Uterus (tissue), 4 donors: ENCODE measurements at regions of chr1 and their contacts with region 1.

Region 1: DNA sequence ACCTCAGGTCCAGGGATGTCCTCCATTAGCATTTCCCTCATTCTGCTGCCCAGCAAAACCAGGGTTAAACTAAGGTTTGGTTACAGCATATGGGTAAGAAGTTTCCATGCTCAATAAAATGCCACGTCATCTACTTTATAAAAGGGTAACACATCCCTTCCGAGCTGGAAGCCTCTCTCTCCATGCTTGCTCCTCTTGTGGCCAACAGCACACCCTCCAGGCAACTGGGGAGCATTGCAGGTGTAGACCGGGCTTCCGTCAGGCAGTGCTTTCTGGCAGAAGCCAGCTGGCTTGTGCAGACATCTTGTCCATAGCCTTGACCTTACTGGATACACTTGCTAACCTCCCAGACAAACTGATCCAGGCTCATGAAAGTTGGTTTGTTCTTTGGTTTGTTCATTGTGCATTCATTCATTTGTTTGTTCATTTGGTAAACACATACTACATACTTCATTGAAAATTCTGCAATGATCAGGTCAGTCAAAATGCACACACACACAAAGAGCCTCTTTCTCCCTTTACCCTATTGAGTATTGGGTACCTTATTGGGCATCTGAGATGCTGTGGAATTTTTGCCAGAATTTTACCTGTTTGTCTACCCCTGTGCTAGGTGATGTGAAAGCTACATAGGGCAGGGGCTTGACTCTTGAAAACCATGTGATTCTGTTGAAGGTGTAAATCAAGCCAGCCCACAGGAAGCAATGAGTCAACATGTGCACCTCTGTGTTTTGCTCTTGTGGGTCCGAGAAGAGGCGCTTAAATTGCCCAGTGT is 422.8 kb downstream of the CAMTA1 start:
- DNase-seq: no peak
- H3K4me3 ChIP-seq: no peak overlapping the region
- H3K27ac ChIP-seq: no peak overlapping the region
- H3K4me1 ChIP-seq: no peaks in the 10 kb centered on the region
- H3K27me3 ChIP-seq: no peaks in the 10 kb centered on the region
- CTCF ChIP-seq: no peak
- POLR2A ChIP-seq: no peak

Region 2: DNA sequence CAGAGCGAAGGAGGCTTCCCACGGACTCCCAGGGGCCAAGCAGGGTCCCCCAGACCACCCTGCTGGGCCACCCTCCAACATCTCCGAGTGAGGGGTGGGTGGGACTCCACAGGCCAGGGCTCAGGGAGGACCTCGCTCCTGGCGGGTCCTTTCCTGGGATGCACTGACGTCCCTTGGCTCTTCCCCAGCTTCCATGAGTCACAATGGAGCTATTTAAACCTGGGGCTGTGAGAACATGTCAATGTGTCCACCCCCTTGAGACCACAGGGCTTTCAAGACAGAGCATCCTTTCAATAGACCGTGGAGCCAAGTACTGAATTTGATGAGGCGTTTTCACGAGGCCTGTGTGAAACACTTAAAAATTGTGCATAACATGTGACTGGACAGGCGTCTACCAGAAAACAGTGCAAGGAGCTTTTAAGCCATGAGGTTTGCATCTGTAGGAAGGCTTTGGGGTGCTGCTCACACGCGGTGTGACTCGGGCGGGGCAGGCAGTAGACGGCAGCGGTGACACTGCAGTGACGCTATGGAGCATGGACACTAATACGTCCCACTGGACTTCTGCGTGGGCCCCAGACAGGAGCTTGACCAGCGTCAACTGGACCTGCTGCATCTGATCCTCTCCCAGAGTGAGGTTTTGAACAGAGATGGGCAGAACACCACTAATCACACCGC is 1191.7 kb before region 1 on chr1:
- intact Hi-C with region 1: loop called (anchors 10 kb)
- DNase-seq: no peak
- H3K4me3 ChIP-seq: no peak overlapping the region
- H3K27ac ChIP-seq: no peak overlapping the region
- H3K4me1 ChIP-seq: no peaks in the 10 kb centered on the region
- H3K27me3 ChIP-seq: no peaks in the 10 kb centered on the region
- CTCF ChIP-seq: no peak
- POLR2A ChIP-seq: no peak

Region 3: DNA sequence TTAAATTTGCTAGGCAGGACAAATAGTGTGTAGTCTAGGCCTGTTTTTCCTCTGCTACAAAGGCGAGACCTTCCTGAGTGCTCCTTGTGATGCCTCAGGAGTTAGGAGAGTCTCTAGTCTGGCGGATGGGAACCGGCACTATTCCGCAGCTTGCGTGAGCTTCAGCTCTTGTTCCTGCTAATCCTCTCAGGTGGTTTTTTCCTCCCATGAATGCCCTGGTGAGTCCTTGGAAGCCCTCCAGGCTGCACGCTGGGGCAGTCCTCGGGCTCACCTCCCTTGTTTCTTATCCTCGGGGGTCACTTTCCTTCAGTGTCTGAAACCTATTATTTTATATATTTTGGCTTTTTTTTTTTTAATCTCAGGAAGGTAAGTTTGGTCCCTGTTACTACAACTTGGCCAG is 616.6 kb after region 1 on chr1:
- intact Hi-C with region 1: no loop called
- DNase-seq: no peak
- H3K4me3 ChIP-seq: no peak overlapping the region
- H3K27ac ChIP-seq: no peak overlapping the region
- H3K4me1 ChIP-seq: no peaks in the 10 kb centered on the region
- H3K27me3 ChIP-seq: no peaks in the 10 kb centered on the region
- CTCF ChIP-seq: no peak
- POLR2A ChIP-seq: no peak